ENCODE measurements at regions of chr1 and their contacts with region 1.

Region 1: DNA sequence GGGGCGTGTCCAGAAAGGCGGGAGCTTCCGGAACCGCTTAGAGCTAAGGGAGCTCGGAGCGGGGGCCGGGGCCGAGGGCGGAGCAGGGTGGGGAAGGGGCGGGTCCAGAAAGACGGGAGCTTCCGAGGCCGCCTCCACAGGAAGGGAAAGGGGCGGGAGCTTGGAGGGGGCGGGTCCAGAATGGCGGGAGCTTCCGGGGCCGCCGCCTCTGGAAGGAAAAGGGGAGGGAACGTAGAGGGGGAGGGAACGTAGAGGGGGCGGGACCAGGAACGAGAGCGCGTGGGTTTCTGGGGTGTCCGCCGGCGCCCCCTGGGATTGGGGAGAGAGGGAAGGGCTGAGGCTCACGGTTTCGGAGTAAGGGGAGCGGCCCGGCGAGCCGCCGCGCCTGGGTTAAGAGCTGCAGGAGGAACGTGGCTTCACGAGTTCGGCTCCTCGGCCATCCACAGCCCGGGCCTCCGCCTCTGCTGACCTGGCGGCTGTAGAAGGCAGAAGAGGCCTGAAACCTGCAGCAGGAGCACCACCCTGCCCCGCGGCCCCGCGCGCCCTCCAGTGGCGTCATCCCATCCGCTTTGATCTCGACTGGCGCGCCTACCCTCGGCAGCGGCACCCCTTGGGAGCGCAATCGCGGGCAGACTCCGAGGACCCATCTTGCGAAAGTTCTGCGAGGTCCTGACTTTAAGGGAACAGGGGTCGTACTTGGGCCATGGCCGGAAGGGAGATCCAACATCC is 22.9 kb upstream of the HPDL start:
- DNase-seq: peak; percentile 75
- ATAC-seq: peak; percentile 97
- H3K4me3 ChIP-seq: peak overlapping the region; percentile 65 to 80
- H3K27ac ChIP-seq: peak overlapping the region; percentile 91
- H3K4me1 ChIP-seq: peaks cover 8% of the 10 kb centered on the region
- H3K27me3 ChIP-seq: no peaks in the 10 kb centered on the region
- CTCF ChIP-seq: peak; percentile 93

Region 2: DNA sequence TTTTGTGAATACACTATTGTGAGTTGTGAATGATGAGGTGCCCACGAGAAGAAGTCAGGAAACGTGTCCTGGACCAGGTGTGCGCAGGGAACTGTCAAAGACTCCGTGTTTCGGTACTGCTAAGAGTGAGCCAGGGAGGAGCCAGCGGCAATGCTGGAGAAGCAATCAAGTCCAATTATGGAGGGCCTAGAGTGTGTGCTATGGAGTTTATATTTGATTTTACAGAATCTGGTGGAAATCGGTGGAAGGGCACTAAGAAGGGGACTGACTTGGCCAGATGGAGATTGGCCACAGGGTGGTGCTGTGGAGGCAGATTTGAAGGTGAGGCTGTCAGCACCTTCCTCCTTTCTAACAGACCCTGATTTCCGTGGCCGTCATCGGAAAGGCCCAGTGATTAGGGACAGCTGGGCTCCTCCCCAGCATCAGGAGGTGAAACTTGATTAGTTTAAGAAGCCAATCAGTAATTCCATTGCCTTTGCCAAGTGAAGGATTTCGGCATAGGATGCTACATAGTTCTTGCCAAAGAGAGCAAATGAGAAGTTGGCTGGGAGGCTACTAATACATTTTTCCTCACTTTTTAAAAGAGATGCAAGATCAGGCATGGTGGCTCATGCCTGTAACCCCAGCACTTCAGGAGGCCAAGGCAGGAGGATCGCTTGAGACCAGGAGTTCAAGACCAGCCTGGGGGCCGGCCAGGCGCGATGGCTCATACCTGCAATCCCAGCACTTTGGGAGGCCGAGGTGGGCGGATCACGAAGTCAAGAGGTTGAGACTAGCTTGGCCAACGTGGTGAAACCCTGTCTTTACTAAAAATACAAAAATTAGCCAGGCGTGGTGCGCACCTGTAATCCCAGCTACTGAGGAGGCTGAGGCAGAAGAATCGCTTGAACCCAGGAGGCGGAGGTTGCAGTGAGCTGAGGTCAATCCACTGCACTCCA is 467.7 kb before region 1 on chr1:
- CTCF ChIA-PET with region 1: no interaction called
- POLR2A ChIA-PET with region 1: no interaction called
- in situ Hi-C with region 1: no loop called
- intact Hi-C with region 1: loop called (anchors 10 kb)
- DNase-seq: peak; percentile 77
- ATAC-seq: peak; percentile 91
- H3K4me3 ChIP-seq: peak overlapping the region in 1 of 2 experiments; percentile 25; a peak in 1 of 4 replicates
- H3K27ac ChIP-seq: no peak overlapping the region
- H3K4me1 ChIP-seq: no peaks in the 10 kb centered on the region
- H3K27me3 ChIP-seq: no peaks in the 10 kb centered on the region
- CTCF ChIP-seq: peak; percentile 93

Region 3: GRCh38 chr1:45155423-45155822 is 148.3 kb before region 1 on chr1:
- CTCF ChIA-PET with region 1: no interaction called
- POLR2A ChIA-PET with region 1: no interaction called
- in situ Hi-C with region 1: no loop called
- intact Hi-C with region 1: no loop called
- DNase-seq: no peak
- ATAC-seq: no peak
- H3K4me3 ChIP-seq: no peak overlapping the region
- H3K27ac ChIP-seq: no peak overlapping the region
- H3K4me1 ChIP-seq: no peaks in the 10 kb centered on the region
- H3K27me3 ChIP-seq: no peaks in the 10 kb centered on the region
- CTCF ChIP-seq: no peak

Region 4: GRCh38 chr1:45177452-45177851 is 126.3 kb before region 1 on chr1:
- CTCF ChIA-PET with region 1: no interaction called
- POLR2A ChIA-PET with region 1: no interaction called
- in situ Hi-C with region 1: no loop called
- intact Hi-C with region 1: no loop called
- DNase-seq: no peak
- ATAC-seq: no peak
- H3K4me3 ChIP-seq: no peak overlapping the region
- H3K27ac ChIP-seq: no peak overlapping the region
- H3K4me1 ChIP-seq: peaks cover 5% of the 10 kb centered on the region
- H3K27me3 ChIP-seq: no peaks in the 10 kb centered on the region
- CTCF ChIP-seq: no peak

Region 5: GRCh38 chr1:45205910-45206721 is 97.6 kb before region 1 on chr1 and contains the start of gene ZSWIM5:
- CTCF ChIA-PET with region 1: interaction called, 8 read pairs
- POLR2A ChIA-PET with region 1: no interaction called
- in situ Hi-C with region 1: no loop called
- intact Hi-C with region 1: loop called (anchors 10 kb)
- DNase-seq: no peak
- ATAC-seq: peak; percentile 95
- H3K4me3 ChIP-seq: peak within 1 kb of the TSS; percentile 82 to 88
- H3K27ac ChIP-seq: peak within 1 kb of the TSS; percentile 79
- H3K4me1 ChIP-seq: peaks cover 23% of the 10 kb centered on the region
- H3K27me3 ChIP-seq: no peaks in the 10 kb centered on the region
- CTCF ChIP-seq: no peak
- total RNA-seq, gene ZSWIM5: 7.9 TPM

Region 6: DNA sequence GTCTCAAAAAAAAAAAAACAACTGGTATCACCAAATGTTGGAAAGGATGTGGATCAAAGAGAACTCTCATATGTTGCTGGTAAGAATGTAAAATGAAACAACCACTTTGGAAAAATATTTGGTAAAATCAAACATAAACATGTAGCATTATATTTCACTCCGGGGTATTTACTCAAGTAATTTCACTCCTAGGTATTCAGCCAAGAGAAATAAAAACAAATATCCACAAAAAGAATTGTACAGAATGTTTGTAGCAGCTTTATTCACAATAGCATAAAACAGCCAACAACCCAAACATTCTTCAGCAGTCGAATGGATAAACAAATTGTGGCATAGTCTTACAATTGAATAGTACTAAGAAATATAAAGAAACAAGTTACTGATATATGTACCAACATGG is 64.9 kb before region 1 on chr1:
- CTCF ChIA-PET with region 1: no interaction called
- POLR2A ChIA-PET with region 1: no interaction called
- in situ Hi-C with region 1: no loop called
- intact Hi-C with region 1: no loop called
- DNase-seq: no peak
- ATAC-seq: no peak
- H3K4me3 ChIP-seq: no peak overlapping the region
- H3K27ac ChIP-seq: no peak overlapping the region
- H3K4me1 ChIP-seq: no peaks in the 10 kb centered on the region
- H3K27me3 ChIP-seq: no peaks in the 10 kb centered on the region
- CTCF ChIP-seq: no peak

Region 7: DNA sequence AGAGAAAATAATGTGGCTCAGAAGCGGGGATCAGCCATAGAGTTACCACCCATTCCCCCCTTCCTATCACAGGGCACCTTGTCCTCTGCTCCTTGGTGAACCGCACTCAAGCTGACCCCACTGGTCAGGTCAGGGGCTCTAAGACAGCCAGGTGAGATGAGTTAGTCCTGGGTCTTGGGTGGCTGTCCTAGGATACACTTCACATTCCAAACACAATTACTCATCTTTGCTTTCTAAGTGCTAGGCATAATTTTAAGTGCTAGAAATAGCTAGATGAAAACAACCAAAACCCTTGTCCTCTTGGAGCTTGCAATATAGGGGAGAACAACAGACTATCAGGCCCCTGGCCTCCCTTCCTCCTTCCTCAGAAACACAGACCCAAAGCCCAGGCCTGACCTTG is 44.3 kb after region 1 on chr1:
- CTCF ChIA-PET with region 1: interaction called, 12 read pairs
- POLR2A ChIA-PET with region 1: interaction called, 5 read pairs
- in situ Hi-C with region 1: no loop called
- intact Hi-C with region 1: no loop called
- DNase-seq: no peak
- ATAC-seq: peak; percentile 34
- H3K4me3 ChIP-seq: no peak overlapping the region
- H3K27ac ChIP-seq: no peak overlapping the region
- H3K4me1 ChIP-seq: no peaks in the 10 kb centered on the region
- H3K27me3 ChIP-seq: no peaks in the 10 kb centered on the region
- CTCF ChIP-seq: no peak

Region 8: DNA sequence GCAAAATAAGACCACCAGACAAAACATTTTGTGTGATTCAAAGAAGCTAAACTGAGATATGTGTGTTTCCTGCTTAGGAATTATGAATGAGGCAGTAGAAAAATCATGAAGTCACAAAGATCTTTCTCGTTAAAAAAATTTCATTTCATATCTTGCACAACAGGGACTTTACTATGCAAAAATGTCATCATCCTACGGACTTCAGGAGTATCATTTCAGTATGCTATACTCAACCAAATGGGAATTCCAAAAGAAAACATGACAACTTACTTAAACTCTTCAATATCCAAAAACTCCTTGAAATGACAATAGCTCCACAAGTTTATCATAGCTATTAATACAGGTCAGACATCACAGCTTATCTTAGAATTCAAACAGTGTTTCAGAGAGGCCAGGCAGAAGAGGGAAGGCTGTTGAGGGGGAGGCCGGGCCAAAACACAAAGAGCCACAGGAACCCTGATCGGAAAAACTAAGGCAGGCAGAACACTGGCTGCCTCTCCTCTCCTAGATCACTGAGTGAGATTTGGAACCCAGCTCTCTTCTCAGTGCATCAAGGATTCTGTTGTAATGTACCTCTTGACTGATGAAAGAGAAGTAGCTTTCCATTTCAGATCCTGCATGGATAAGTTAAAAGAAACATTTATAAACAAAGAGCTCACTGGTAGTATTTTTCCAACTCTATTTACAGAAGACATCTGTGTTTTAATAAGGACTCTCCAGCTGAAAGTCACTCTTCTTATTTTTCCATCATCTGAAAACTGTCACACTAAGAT is 120.3 kb after region 1 on chr1:
- CTCF ChIA-PET with region 1: no interaction called
- POLR2A ChIA-PET with region 1: interaction called, 19 read pairs
- in situ Hi-C with region 1: no loop called
- intact Hi-C with region 1: no loop called
- DNase-seq: no peak
- ATAC-seq: no peak
- H3K4me3 ChIP-seq: no peak overlapping the region
- H3K27ac ChIP-seq: no peak overlapping the region
- H3K4me1 ChIP-seq: no peaks in the 10 kb centered on the region
- H3K27me3 ChIP-seq: no peaks in the 10 kb centered on the region
- CTCF ChIP-seq: no peak

Region 9: GRCh38 chr1:45608175-45609156 is 304.7 kb after region 1 on chr1:
- CTCF ChIA-PET with region 1: no interaction called
- POLR2A ChIA-PET with region 1: no interaction called
- in situ Hi-C with region 1: no loop called
- intact Hi-C with region 1: no loop called
- DNase-seq: no peak
- ATAC-seq: no peak
- H3K4me3 ChIP-seq: no peak overlapping the region
- H3K27ac ChIP-seq: no peak overlapping the region
- H3K4me1 ChIP-seq: no peaks in the 10 kb centered on the region
- H3K27me3 ChIP-seq: no peaks in the 10 kb centered on the region
- CTCF ChIP-seq: no peak